GM13977 (cell line): ENCODE measurements at regions of chr16 and their contacts with region 1.

Region 1: DNA sequence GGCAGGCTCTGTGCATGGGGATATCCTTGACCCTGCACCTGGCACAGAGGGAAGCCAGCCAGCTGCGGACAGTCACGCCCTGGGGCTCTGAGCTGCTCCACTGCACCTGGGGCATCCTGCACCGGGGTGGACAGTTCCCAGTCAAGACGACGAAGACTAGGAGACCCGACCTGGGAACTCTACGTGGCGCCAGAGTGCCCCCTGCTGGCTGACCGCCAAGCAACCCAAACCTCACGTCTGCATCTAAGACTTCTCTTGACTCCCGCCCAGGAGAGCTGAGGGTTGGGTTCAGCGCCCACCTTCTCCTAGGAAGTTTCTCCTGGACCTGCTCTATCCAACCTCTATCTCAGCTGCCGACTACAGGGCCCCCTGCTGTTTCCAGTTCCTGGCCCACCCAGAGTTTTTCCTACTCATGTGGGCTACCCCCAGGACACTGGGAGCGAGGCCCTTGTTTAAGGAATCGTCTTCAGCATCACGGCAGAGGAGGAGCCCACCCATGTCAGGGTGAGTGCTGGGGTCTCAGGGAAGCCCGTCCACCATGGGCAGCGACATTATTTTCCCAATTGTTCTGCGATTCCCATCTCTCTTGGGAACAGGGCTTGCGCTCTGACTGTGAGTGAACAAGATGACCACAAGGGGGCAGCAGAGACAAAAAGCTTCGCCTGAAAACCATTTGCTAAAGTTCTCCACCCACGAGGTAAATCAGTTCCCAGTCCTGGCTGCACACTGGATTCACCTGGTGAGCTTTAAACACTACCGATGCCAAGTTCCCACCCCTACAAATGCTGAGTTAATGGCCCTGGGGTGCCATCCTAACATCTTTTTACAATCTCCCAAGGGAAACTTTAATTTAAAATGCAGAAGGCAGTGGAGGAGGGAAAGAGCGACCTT is 29.3 kb downstream of the TLE7 start:
- DNase-seq: peak; percentile 84
- CTCF ChIP-seq: peak; percentile 78

Region 2: DNA sequence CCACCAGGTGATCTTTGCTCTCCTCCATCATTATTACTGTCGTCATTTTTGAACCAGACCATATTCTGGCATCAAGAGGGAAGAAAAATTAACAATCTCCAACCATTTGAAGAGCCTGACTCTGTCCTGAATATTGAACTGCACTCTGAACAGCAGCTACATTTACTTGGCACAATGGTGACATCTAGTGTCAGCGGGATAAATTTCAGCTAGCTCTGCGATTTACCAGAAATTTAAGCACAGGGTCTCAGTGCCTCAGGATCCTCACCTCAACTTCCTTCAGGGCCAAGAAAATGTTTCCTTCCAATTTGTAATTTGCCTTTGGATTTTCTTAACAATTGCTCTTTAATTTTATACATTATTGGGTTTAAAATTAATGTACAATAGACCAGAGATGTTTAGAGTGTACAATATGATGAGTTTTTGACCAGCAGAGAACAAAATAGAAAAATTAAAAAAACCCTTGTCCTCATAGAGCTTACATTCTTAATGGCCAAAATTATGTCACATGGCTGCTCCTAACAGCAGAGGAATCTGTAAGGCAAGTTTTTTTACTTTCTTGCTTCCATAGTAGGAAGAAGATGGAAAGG is 87.4 kb after region 1 on chr16:
- in situ Hi-C with region 1: loop called (anchors 5 kb)
- DNase-seq: peak; percentile 65
- CTCF ChIP-seq: peak; percentile 79

Region 3: DNA sequence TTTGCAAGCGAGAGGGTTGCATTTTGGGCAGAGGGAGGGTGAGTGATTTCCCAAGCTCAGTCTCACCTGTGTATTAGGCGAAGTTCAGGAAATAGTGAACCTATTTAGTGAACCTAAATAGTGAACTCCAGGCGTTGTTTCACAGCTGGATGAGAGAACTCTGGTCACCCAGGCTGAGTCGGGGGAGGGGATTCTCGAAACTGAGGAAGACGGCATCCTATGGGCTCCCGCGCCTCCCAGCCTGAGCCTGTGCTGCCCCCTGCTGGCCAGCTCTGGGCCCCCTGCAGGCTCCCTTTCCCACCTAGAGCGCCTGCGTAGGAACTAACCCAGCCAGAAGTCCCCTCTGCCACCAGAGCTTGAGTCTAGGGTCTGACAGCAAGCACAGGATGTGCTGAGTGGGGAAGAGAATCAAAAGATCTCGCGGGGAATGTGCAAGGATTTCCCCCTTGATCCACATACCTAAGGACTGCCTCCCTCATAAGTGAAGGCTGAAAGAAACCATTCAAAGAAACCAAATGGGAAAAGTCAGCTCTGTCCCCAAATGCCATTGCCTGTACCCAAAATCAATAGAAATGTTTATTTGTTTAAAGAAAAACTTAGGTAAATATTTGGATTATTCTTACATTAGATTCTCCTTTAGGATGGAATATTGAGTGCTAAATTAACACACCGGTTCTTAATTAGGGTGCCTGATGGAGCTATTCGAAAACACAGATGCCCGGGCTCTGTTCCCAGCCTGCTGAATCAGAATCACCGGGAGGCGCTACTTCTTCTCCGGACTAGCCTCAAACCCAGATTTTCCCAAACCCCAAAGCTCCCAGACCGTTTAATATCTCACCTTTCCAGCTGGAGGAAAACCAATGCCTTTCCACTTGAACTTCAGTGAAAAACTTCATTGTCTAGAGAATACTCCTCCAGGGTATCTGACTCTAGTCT is 198.7 kb after region 1 on chr16:
- in situ Hi-C with region 1: loop called (anchors 25 kb)
- DNase-seq: peak; percentile 81
- CTCF ChIP-seq: peak; percentile 98